Activated naive CD4-positive, alpha-beta T cell treated with anti-CD3 and anti-CD28 coated beads for 36 hours (primary cell): ENCODE measurements at regions of chr11 and their contacts with region 1.

Region 1: DNA sequence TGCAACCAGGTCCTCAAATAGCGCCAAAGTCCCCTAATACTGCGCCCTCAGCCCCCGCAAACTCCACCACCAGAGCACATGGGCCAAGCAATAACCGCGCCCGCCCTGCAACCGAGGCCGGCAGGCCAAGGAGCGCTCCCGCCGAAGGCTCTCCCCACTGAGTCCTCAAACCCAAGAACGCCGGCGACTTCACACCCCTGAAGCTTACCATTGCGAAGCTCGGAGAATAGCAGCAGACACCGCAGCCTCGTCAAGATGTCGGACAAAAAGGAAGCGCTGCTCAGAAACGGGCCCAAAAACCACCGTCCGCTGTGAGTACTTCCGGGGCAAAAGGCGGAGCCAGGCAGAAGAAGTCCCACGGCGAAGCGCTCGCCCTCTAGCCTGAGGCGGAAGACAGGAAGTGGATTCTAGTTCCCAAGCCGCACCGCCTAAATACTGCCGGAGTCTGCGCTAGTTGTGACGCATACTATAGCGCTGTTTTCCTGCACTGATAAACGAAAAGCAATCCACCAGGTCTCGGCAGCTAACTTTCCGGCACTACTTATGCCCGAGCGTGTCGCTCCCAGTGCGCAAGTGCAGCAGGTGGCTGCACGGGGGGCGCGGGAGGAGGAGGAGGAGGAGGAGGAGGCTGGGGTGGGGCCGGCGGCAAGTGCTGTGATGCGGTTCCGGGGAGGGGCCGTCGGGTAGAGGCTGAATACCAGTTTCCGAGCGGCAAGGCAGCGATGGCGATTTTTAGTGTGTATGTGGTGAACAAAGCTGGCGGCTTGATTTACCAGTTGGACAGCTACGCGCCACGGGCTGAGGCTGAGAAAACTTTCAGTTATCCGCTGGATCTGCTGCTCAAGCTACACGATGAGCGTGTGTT is at the starts of genes RPS25 and TRAPPC4:
- DNase-seq: peak; percentile 98
- H3K4me3 Mint-ChIP-seq: peak within 1 kb of the TSS; percentile 98
- H3K27ac Mint-ChIP-seq: peak within 1 kb of the TSS; percentile 99
- H3K4me1 Mint-ChIP-seq: peaks cover 59% of the 10 kb centered on the region
- H3K27me3 Mint-ChIP-seq: no peaks in the 10 kb centered on the region
- total RNA-seq, gene RPS25: 2,183 to 2,206 TPM
- total RNA-seq, gene TRAPPC4: 66.4 to 69.9 TPM

Region 2: DNA sequence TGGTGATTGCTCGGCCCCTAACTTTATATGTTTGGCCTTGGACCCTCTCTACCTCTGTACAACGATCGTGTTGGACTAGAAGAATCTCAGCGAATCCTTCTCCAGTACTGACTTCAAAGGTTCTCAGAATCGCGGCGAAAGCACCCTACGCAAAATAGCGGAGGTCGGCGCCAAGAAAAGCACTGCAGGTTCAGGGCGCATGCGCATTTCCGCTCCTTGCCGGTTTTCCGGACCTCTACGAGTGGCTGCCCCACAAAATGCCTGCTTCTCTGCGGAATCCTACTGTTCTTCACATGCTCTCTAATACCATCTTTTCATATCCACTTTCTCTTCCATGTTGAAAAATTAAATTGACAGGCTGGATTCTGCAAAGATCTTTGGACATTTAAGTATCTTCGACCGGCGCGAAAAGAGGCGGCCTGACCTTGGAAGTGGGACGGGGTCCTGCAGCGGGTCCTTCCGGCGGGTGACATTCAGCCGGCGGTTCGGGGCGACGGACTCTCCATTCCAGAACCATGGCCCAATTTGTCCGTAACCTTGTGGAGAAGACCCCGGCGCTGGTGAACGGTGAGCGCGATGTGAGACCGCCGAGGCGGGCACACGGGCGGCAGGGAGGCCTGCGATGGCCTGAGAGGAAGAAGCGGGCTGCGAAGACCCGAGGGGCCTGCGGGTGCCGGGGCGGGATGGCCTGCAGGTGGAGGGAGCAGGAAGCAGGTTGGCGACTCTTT is 617.0 kb before region 1 on chr11 and contains the start of gene ATP5MG:
- CTCF ChIA-PET with region 1: no interaction called
- intact Hi-C with region 1: loop called (anchors 10 kb)
- DNase-seq: peak; percentile 97
- H3K4me3 Mint-ChIP-seq: peak within 1 kb of the TSS; percentile 95
- H3K27ac Mint-ChIP-seq: peak within 1 kb of the TSS; percentile 98
- H3K4me1 Mint-ChIP-seq: peaks cover 58% of the 10 kb centered on the region
- H3K27me3 Mint-ChIP-seq: no peaks in the 10 kb centered on the region
- total RNA-seq, gene ATP5MG: 279 to 284 TPM

Region 3: DNA sequence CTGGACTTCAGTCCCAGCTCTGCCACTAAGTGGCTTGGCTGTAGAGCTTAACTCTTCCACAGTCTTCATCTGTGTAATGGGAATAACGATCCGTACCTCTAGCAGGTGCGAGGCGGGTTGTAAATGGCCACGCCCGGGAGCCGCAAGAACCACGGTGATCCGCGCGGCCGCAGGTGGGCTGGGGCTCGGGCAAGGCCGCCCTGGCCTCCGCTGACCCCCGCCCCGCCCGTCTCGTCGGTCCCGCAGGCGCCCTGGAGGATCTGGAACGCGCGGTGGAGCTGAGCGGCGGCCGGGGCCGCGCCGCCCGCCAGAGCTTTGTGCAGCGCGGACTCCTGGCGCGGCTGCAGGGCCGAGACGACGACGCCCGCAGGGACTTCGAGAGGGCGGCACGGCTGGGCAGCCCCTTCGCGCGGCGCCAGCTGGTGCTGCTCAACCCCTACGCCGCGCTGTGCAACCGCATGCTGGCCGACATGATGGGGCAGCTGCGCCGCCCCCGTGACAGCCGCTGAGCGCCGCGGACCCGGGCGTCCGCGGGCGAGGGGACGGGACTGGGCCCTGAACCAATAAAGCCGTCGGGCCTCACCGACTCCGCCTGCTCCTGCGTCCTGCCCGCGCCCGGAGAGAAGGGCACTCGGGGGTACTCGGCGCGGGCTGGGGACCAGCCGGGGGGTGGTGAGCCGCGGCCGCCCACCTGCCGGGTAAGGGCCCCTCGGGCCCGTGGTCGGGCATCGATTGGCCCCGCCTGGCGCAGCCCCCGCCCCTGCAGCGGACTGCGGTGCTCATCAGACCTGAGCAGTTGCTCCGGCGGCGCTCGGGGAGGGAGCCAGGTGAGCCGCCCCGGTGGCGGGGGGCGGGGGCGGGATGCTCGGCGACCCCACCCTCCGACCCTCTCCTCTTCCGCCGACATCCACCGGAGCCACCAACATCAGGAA is 487.6 kb before region 1 on chr11 and contains the start of gene TMEM25:
- CTCF ChIA-PET with region 1: no interaction called
- intact Hi-C with region 1: loop called (anchors 2 kb)
- DNase-seq: peak; percentile 75
- H3K4me3 Mint-ChIP-seq: peak within 1 kb of the TSS; percentile 95
- H3K27ac Mint-ChIP-seq: no peak within 1 kb of the TSS
- H3K4me1 Mint-ChIP-seq: peaks cover 30% of the 10 kb centered on the region
- H3K27me3 Mint-ChIP-seq: no peaks in the 10 kb centered on the region
- total RNA-seq, gene TMEM25: 13.3 to 14.1 TPM

Region 4: GRCh38 chr11:118997627-118998387 is 20.5 kb before region 1 on chr11 and contains the start of gene CENATAC:
- CTCF ChIA-PET with region 1: interaction called, 6 read pairs
- intact Hi-C with region 1: loop called (anchors 1 kb)
- DNase-seq: peak; percentile 98
- H3K4me3 Mint-ChIP-seq: peak within 1 kb of the TSS; percentile 88
- H3K27ac Mint-ChIP-seq: peak within 1 kb of the TSS; percentile 96
- H3K4me1 Mint-ChIP-seq: peaks cover 33% of the 10 kb centered on the region
- H3K27me3 Mint-ChIP-seq: no peaks in the 10 kb centered on the region
- total RNA-seq, gene CENATAC: 17.4 to 18.0 TPM

Region 5: DNA sequence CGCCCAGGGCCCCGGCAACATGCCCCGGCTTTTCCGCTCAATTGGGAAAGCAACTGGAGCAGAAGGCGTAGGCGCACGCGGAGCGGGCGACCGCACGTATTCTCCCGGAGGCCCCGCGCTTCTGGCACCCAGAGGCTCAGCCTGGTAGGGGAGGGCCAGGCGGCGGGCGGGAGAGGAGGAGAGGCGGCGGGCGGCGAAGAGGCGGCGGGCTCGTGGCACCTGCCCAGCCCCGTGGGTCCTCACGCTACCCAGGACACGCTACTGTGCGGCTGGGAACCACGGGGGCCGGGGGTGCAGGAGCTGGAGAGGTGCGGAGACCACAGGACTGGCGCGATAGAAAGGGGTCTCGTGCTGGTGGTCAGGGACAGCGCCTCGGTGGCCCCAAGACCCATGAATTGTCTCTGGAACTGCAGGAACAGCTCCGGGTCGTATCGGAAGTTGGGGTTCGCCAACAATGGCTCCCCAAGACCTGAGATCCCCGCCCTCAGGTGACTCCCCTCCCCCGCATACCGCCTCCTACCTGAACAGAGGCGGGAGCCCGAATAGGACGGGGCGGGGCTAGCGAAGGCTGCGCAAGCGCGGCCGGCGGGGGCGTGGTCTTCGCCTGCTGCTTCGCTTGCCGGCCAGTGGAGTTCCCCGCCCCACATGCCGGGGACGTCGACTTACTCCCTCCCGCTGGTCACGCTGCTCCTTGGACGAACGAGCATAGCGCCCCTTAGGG is 12.2 kb after region 1 on chr11 and contains the start of gene SLC37A4:
- CTCF ChIA-PET with region 1: interaction called, 4 read pairs
- intact Hi-C with region 1: loop called (anchors 1 kb)
- DNase-seq: peak; percentile 99
- H3K4me3 Mint-ChIP-seq: peak within 1 kb of the TSS; percentile 77
- H3K27ac Mint-ChIP-seq: peak within 1 kb of the TSS; percentile 85
- H3K4me1 Mint-ChIP-seq: peaks cover 23% of the 10 kb centered on the region
- H3K27me3 Mint-ChIP-seq: no peaks in the 10 kb centered on the region
- total RNA-seq, gene SLC37A4: 28.3 to 30.3 TPM

Region 6: DNA sequence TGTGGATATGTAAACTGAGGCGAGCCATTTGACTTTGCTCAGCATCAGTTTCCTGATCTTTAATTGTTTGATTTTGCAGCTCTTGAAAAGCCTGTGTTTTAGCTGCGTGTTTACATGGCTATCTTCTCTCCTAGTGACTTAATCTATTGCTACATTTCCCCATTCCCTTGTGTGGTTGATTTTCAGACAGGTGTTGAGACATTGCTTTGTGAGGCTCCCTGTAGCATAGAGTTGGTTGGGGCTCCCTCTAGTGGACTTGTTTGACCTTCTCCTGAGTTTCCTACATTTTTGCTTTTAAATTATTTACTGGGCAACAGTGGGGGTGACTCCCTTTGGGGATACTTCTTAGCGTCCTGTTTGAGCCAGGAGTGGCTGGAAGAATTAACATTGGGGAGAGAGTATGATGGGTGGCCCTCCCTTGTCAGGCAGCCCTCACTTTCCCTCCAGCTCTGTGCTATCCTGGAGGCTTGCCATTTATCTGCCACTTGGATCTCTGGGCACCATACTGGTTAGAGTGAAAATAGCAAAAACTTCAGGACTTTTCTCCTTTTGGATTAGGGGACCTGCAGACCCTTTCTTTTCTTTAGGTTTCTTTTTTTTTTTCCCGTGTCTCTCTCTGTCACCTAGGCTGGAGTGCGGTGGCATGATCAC is 178.7 kb after region 1 on chr11:
- CTCF ChIA-PET with region 1: no interaction called
- intact Hi-C with region 1: loop called (anchors 1 kb)
- DNase-seq: peak; percentile 88
- H3K4me3 Mint-ChIP-seq: no peak overlapping the region
- H3K27ac Mint-ChIP-seq: no peak overlapping the region
- H3K4me1 Mint-ChIP-seq: no peaks in the 10 kb centered on the region
- H3K27me3 Mint-ChIP-seq: no peaks in the 10 kb centered on the region